Posterior cingulate gyrus (tissue), 11 donors: ENCODE measurements at regions of chr6 and their contacts with region 1.

Region 1: GRCh38 chr6:6315660-6316059 is 4.8 kb downstream of the F13A1 start:
- DNase-seq: peak in 5 of 10 donors; percentile 34 to 85 (median 40)

Region 2: GRCh38 chr6:5736016-5736738 is 579.5 kb before region 1 on chr6:
- intact Hi-C with region 1: no loop called
- DNase-seq: peak in 1 of 10 donors; percentile 74

Region 3: DNA sequence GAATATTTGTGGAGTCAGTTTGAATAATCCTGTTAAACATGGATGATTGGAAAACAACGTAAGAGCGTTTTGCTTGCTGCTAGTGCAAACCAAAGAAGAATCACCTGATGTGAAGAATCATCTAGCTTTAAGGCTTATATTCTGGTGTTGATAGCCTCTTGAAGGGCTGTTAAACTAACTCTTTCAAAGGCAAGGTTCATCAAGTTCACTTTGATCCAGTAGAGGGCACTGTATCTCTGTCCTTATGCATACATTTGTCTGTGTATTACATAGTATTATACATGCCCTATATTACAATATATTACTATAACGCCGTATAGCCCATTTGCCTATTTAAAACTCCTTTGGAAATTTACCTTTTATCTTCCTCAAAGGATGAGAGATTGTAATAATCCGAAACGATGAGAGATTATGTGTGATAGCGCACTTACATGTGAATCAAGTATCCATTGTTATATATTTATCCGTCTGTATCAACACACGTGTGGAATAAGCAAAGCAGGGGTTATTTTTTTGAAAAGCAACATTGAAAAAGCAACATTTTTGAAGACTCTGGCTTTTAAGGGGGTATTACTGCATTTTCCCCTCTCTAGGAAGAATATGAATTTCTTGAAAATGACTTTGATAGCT is 258.1 kb before region 1 on chr6:
- intact Hi-C with region 1: loop called (anchors 5 kb)
- DNase-seq: no peak

Region 4: DNA sequence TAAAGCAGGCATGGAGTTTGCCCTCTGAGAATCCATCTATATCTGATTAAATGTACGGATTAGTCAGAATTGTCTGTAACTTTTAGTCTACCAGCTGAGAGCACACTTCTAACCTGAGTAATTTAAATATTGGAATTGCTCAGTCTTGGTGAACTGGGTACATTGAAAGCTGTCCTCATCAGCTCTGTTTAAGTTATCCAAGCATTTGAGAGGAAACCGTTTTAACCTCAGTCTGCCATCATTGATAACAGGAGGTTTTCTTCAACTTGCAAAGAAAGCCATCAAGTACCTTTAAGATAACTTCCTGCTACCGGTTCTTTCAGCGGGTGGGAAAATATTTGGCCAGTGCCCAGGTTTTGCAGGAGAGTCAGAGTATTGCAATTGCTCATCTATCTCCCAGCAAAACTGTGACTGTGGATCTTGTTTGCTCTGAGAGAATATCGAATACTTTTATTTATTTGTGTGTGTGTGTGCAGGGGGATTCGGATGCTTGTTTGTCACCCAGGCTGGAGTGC is 35.9 kb after region 1 on chr6:
- intact Hi-C with region 1: no loop called
- DNase-seq: no peak